ENCODE measurements at regions of chr15 and their contacts with region 1.

Region 1: DNA sequence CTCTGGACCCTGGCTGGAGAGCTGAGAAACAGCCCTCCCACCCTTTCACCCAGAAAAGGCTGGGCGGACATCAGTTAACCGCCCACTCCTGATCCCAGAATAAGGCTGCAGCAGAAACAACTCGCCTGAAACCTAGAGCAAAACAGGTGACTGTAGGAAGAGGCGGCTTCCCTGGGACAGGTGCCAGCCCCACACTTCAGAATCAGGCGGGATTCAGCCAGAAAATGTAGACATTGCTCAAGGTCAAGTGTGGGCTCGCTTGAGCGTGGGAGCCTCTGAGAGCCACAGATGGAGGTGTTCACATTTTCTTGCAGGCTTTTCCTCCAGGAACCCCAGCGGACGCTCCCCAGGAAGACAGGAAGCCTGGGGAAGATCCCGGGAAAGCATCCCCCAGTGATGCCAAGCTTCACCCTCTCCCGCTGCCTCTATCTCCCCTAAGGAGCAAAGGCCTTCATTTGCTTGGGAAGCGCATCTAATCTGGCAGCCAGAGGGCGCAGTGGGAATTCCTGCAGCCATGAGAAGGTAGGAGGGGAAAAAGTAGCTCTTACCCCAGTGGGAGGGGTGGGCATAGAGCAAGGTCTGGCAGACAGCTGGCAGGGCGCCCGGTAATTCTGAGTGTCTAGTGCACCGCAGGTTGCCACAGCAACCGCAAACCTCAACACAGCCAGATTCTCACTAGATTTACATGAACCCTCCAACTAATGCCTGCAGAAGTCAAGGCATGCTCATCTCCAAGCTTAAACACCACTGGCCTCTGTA is 77.7 kb downstream of the OCA2 start:
- DNase-seq: peak; percentile 96
- H3K4me3 ChIP-seq: no peak overlapping the region
- H3K27ac ChIP-seq: peak overlapping the region in 1 of 2 experiments; percentile 74; a peak in 2 of 4 replicates
- H3K4me1 ChIP-seq: peaks cover 0 to 23% of the 10 kb centered on the region in 2 experiments; a peak in 2 of 4 replicates
- H3K27me3 ChIP-seq: no peaks in the 10 kb centered on the region
- CTCF ChIP-seq: peak; percentile 51
- EP300 ChIP-seq: 0 out of 4 replicates have a peak, but pooled peaks of 1 of the 2 experiments have one; percentile 30
- RAD21 ChIP-seq: peak; percentile 75

Region 2: DNA sequence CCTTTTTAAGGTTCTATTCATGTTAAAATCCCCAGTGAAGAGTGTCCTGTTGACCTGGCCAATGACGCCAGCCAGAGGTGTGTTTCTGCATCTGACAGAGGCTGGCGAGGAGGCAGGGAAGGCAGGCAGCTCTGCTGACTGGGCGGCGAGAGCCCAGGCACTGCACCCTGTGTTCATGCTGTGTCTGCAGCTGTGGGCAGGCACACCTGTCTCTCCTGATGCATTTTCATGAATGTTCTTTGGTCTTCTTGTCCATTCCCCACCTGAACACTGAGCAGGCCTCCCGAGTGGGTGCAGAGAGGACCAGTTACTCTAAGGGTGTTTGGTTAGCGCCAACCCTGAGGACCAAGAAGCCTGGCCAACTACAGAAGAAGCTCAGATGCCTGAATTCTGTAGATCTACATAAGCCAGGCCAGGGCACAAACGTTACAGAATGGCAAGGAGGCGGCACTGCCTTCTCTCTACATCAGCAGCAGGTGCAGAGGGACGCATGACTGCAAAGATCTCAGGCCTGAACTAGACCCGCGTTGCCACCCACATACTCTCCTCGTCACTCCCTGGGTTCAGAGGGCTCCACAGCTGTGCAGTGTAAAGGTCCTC is 156.0 kb before region 1 on chr15:
- CTCF ChIA-PET with region 1: no interaction called
- POLR2A ChIA-PET with region 1: no interaction called
- DNase-seq: no peak
- H3K4me3 ChIP-seq: no peak overlapping the region
- H3K27ac ChIP-seq: no peak overlapping the region
- H3K4me1 ChIP-seq: no peaks in the 10 kb centered on the region
- H3K27me3 ChIP-seq: no peaks in the 10 kb centered on the region
- CTCF ChIP-seq: no peak
- EP300 ChIP-seq: no peak
- RAD21 ChIP-seq: no peak

Region 3: GRCh38 chr15:27897481-27897880 is 124.0 kb before region 1 on chr15:
- CTCF ChIA-PET with region 1: no interaction called
- POLR2A ChIA-PET with region 1: no interaction called
- DNase-seq: no peak
- H3K4me3 ChIP-seq: no peak overlapping the region
- H3K27ac ChIP-seq: no peak overlapping the region
- H3K4me1 ChIP-seq: no peaks in the 10 kb centered on the region
- H3K27me3 ChIP-seq: no peaks in the 10 kb centered on the region
- CTCF ChIP-seq: no peak
- EP300 ChIP-seq: no peak
- RAD21 ChIP-seq: no peak

Region 4: GRCh38 chr15:27977696-27978095 is 43.8 kb before region 1 on chr15:
- CTCF ChIA-PET with region 1: no interaction called
- POLR2A ChIA-PET with region 1: no interaction called
- DNase-seq: no peak
- H3K4me3 ChIP-seq: no peak overlapping the region
- H3K27ac ChIP-seq: no peak overlapping the region
- H3K4me1 ChIP-seq: no peaks in the 10 kb centered on the region
- H3K27me3 ChIP-seq: no peaks in the 10 kb centered on the region
- CTCF ChIP-seq: no peak
- EP300 ChIP-seq: no peak
- RAD21 ChIP-seq: no peak

Region 5: DNA sequence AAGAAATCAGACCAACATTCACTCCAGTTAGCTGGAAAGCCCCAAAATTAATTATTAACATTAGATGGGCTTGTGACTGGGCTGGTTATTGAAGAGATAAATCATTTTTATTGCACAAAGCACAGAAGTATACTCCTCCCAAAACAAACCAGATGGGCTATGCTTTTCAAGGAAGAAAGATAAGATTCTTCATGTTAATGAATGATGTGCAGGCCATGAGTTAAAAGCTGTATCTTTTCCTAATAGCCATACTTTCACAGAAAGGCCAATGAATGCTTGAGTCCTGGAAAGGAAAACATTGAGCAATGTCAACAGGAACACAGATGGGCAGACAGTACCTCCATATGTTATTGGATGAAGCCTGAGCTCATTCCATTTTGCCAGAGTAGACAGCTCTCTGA is 22.2 kb after region 1 on chr15:
- CTCF ChIA-PET with region 1: interaction called, 14 read pairs
- POLR2A ChIA-PET with region 1: no interaction called
- DNase-seq: peak; percentile 45
- H3K4me3 ChIP-seq: no peak overlapping the region
- H3K27ac ChIP-seq: peak overlapping the region in 1 of 2 experiments; percentile 78; a peak in 2 of 4 replicates
- H3K4me1 ChIP-seq: peaks cover 0 to 8% of the 10 kb centered on the region in 2 experiments; a peak in 2 of 4 replicates
- H3K27me3 ChIP-seq: no peaks in the 10 kb centered on the region
- CTCF ChIP-seq: no peak
- EP300 ChIP-seq: peak in 1 of 2 experiments; percentile 21; a peak in 1 of 4 replicates
- RAD21 ChIP-seq: no peak

Region 6: GRCh38 chr15:28060005-28060404 is 38.5 kb after region 1 on chr15:
- CTCF ChIA-PET with region 1: interaction called, 26 read pairs
- POLR2A ChIA-PET with region 1: no interaction called
- DNase-seq: no peak
- H3K4me3 ChIP-seq: no peak overlapping the region
- H3K27ac ChIP-seq: no peak overlapping the region
- H3K4me1 ChIP-seq: peaks cover 0 to 13% of the 10 kb centered on the region in 2 experiments; a peak in 1 of 4 replicates
- H3K27me3 ChIP-seq: no peaks in the 10 kb centered on the region
- CTCF ChIP-seq: no peak
- EP300 ChIP-seq: no peak
- RAD21 ChIP-seq: no peak

Region 7: DNA sequence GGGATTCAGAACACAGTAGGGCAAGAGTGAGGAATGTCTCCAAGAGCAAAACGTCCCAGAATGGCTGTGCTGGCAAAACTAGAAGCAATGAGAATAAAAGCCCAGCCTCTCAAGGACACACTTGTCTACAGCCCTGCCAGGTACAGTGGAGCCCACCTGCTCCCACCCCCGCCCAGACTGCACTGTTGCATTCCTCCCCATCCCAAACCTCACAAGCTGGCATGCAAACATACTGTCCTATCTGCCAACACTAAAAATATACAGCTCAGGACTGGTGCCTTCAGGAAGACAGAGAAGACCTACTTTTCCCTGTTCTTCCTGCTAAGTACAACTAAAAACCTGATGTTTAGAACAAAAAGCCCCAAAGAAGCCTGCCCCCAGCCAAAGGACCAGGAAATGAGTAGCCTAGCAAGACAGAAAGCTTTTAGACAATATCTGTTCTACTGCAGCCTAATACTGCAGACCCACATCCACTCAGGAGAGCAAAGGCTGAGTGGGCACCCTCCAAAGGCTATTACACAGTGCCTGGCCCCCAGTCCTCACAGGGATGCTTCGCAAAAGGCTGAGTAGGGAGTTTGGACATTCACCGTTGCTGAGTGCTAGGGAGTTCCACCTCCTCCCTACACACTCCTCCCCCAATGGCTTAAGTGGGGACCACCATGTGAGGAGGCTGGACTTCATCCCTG is 64.2 kb after region 1 on chr15:
- CTCF ChIA-PET with region 1: interaction called, 11 read pairs
- POLR2A ChIA-PET with region 1: no interaction called
- DNase-seq: no peak
- H3K4me3 ChIP-seq: no peak overlapping the region
- H3K27ac ChIP-seq: no peak overlapping the region
- H3K4me1 ChIP-seq: no peaks in the 10 kb centered on the region
- H3K27me3 ChIP-seq: no peaks in the 10 kb centered on the region
- CTCF ChIP-seq: no peak
- EP300 ChIP-seq: no peak
- RAD21 ChIP-seq: no peak

Region 8: DNA sequence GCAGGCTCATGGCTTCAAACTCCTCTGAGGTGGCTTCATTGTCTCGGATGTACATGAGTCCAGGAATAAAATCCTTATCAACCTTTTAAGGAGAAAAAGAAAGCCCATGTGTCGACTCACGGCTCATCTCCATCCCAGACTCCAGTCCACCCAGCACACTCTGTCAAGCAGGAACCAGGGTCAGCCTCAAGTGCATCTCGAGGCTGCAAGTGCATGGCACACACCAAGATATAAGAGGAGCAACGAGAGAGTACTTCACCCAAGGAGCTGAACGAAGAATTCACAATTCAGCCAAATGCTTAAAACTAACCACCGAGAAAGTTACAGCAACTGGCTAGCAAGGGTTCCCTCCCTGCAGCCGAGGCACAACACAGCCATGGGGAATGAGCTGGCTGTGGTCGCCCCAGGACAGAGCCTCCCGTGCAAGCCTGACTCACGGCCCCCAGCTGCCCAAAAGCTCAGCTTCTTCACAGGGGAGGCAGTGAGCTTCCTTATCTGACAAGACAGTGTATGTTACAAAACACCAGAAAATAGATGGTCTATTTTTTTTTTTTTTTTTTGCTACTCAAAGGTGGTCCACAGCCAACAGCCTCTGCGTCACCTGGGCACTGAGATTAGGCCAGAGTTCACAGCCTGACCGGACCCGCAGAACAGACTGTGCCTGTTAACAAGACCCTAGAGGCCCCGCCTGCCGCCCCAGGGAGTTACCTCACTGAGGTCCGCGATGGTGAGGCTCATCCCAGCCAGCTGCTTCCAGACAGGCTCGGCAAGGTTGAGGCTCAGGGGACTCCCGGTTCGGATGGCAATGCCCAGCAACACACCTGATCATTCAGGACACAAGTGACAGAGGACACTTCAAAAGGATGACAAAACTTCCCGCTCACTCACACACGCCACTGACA is 93.5 kb after region 1 on chr15:
- CTCF ChIA-PET with region 1: interaction called, 12 read pairs
- POLR2A ChIA-PET with region 1: no interaction called
- DNase-seq: no peak
- H3K4me3 ChIP-seq: no peak overlapping the region
- H3K27ac ChIP-seq: no peak overlapping the region
- H3K4me1 ChIP-seq: no peaks in the 10 kb centered on the region
- H3K27me3 ChIP-seq: no peaks in the 10 kb centered on the region
- CTCF ChIP-seq: no peak
- EP300 ChIP-seq: no peak
- RAD21 ChIP-seq: no peak